GM13977 (cell line): ENCODE measurements at regions of chr16 and their contacts with region 1.

Region 1: GRCh38 chr16:66406534-66407221 is 20.4 kb upstream of the BEAN1 start:
- DNase-seq: peak; percentile 90
- CTCF ChIP-seq: peak; percentile 92

Region 2: GRCh38 chr16:66478733-66479511 is 72.2 kb after region 1 on chr16:
- in situ Hi-C with region 1: loop called (anchors 10 kb)
- DNase-seq: peak; percentile 86
- CTCF ChIP-seq: peak; percentile 89

Region 3: GRCh38 chr16:66588981-66589713 is 182.5 kb after region 1 on chr16:
- in situ Hi-C with region 1: loop called (anchors 25 kb)
- DNase-seq: peak; percentile 79
- CTCF ChIP-seq: peak; percentile 94

Region 4: GRCh38 chr16:66728117-66728787 is 321.6 kb after region 1 on chr16:
- in situ Hi-C with region 1: loop called (anchors 25 kb)
- DNase-seq: peak; percentile 60
- CTCF ChIP-seq: peak; percentile 60

Region 5: GRCh38 chr16:66872943-66873684 is 466.4 kb after region 1 on chr16:
- in situ Hi-C with region 1: loop called (anchors 25 kb)
- DNase-seq: peak; percentile 86
- CTCF ChIP-seq: peak; percentile 98